ENCODE measurements at regions of chr7 and their contacts with region 1.

Region 1: GRCh38 chr7:158508802-158509385 is 78.7 kb downstream of the PTPRN2 start:
- DNase-seq: no peak
- H3K4me3 ChIP-seq: no peak overlapping the region
- H3K27ac ChIP-seq: no peak overlapping the region
- H3K4me1 ChIP-seq: no peaks in the 10 kb centered on the region
- H3K27me3 ChIP-seq: no peaks in the 10 kb centered on the region
- CTCF ChIP-seq: no peak

Region 2: GRCh38 chr7:158957921-158958491 is 449.1 kb after region 1 on chr7:
- intact Hi-C with region 1: loop called (anchors 5 kb)
- DNase-seq: peak; percentile 92
- H3K4me3 ChIP-seq: peak overlapping the region; percentile 22
- H3K27ac ChIP-seq: no peak overlapping the region
- H3K4me1 ChIP-seq: no peaks in the 10 kb centered on the region
- H3K27me3 ChIP-seq: no peaks in the 10 kb centered on the region
- CTCF ChIP-seq: no peak